PC-3 (cell line): ENCODE measurements at regions of chr5 and their contacts with region 1.

Region 1: GRCh38 chr5:27020973-27021372 is 17.4 kb downstream of the CDH9 start:
- DNase-seq: peak; percentile 61
- ATAC-seq: peak; percentile 72
- H3K4me3 ChIP-seq: no peak overlapping the region
- H3K27ac ChIP-seq: no peak overlapping the region
- H3K4me1 ChIP-seq: peaks cover 4% of the 10 kb centered on the region
- H3K27me3 ChIP-seq: no peaks in the 10 kb centered on the region
- CTCF ChIP-seq: peak; percentile 73

Region 2: DNA sequence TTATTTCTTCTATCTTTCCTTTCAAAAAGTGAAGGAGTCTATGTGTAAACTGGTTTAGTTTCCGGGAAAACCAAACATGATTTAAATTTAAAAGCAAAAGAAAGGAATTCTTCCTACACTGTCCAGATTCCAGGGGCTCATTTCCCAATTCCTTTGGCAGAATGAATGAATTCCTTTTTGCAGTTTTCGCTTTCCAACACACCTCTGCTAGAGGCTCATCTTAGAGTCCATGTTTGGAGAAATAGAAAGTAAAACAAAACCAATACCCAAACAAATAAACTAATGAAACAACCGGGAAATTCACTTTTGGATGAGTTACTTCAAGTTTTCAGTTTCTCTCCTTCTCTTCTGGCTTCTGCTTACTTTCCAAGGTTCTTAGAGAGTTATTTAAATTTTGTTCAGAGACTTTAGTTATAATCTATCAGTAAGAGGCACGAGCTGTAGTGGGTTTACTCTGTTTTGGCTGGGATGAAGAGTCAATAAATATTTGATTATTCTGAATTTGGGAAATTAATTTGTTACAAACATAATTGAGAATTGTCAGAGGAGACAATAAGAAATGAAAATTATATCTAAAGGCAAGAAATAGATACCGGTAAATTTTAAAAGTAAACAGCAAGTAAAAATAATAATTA is 382.4 kb after region 1 on chr5:
- CTCF ChIA-PET with region 1: no interaction called
- POLR2A ChIA-PET with region 1: no interaction called
- intact Hi-C with region 1: loop called (anchors 10 kb)
- DNase-seq: peak; percentile 46
- ATAC-seq: peak; percentile 66
- H3K4me3 ChIP-seq: peak overlapping the region; percentile 76
- H3K27ac ChIP-seq: no peak overlapping the region
- H3K4me1 ChIP-seq: no peaks in the 10 kb centered on the region
- H3K27me3 ChIP-seq: no peaks in the 10 kb centered on the region
- CTCF ChIP-seq: no peak

Region 3: GRCh38 chr5:27734838-27735237 is 713.9 kb after region 1 on chr5:
- CTCF ChIA-PET with region 1: no interaction called
- POLR2A ChIA-PET with region 1: no interaction called
- intact Hi-C with region 1: no loop called
- DNase-seq: no peak
- ATAC-seq: no peak
- H3K4me3 ChIP-seq: no peak overlapping the region
- H3K27ac ChIP-seq: no peak overlapping the region
- H3K4me1 ChIP-seq: no peaks in the 10 kb centered on the region
- H3K27me3 ChIP-seq: no peaks in the 10 kb centered on the region
- CTCF ChIP-seq: no peak

Region 4: GRCh38 chr5:28369418-28369817 is 1348.4 kb after region 1 on chr5:
- CTCF ChIA-PET with region 1: no interaction called
- POLR2A ChIA-PET with region 1: no interaction called
- intact Hi-C with region 1: loop called (anchors 10 kb)
- DNase-seq: peak; percentile 37
- ATAC-seq: no peak
- H3K4me3 ChIP-seq: no peak overlapping the region
- H3K27ac ChIP-seq: no peak overlapping the region
- H3K4me1 ChIP-seq: peaks cover 11% of the 10 kb centered on the region; the same call in 1 of the 2 replicates
- H3K27me3 ChIP-seq: no peaks in the 10 kb centered on the region
- CTCF ChIP-seq: no peak

Region 5: DNA sequence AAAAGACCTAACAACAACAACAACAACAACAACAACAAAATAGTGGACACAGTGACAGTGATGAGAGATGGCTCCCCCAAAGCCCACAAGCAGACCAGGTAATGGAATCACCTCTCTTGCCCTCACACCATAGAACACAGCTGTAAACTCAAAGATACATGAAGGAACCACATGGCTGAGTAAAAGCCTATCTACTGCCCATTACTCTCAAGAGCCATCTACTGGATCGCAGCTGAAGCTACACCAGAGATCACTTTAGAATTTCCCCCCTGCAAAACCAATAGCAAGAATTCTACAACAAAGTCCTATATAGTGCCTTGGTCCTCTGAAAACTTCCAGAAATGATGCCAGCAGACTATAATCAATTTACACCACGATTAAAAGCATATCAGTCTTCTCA is 1555.0 kb after region 1 on chr5:
- CTCF ChIA-PET with region 1: no interaction called
- POLR2A ChIA-PET with region 1: no interaction called
- intact Hi-C with region 1: loop called (anchors 5 kb)
- DNase-seq: peak; percentile 54
- ATAC-seq: peak; percentile 77
- H3K4me3 ChIP-seq: no peak overlapping the region
- H3K27ac ChIP-seq: no peak overlapping the region
- H3K4me1 ChIP-seq: peaks cover 4% of the 10 kb centered on the region; the same call in 1 of the 2 replicates
- H3K27me3 ChIP-seq: no peaks in the 10 kb centered on the region
- CTCF ChIP-seq: peak; percentile 73

Region 6: DNA sequence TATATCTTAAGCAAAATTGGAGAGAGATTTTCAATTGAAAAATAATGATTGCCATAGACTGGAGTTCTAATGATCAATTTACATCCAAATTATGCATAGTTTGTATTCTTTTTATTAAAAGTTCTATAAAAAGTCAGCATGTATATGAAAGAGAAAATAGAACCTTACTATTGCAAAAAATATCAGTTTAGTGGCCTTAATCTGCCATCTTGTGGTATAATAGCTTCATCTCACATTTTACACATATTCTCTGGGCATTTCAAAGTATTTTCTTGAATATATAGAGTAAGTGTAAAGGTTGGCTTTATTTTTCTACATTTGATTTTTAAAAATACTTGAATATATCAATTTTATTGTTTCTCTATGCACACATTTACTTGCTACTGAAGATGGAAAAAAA is 1876.0 kb after region 1 on chr5:
- CTCF ChIA-PET with region 1: no interaction called
- POLR2A ChIA-PET with region 1: no interaction called
- intact Hi-C with region 1: loop called (anchors 10 kb)
- DNase-seq: peak; percentile 59
- ATAC-seq: no peak
- H3K4me3 ChIP-seq: no peak overlapping the region
- H3K27ac ChIP-seq: no peak overlapping the region
- H3K4me1 ChIP-seq: 0 out of 2 replicates have a peak, but pooled peaks cover 3% of the 10 kb centered on the region
- H3K27me3 ChIP-seq: no peaks in the 10 kb centered on the region
- CTCF ChIP-seq: peak; percentile 59